Breast epithelium (tissue), 4 donors: ENCODE measurements at regions of chr13 and their contacts with region 1.

Region 1: GRCh38 chr13:45063261-45063860 is 56.9 kb upstream of the GTF2F2 start:
- DNase-seq: no peak
- H3K4me3 ChIP-seq: no peak overlapping the region
- H3K27ac ChIP-seq: no peak overlapping the region
- H3K4me1 ChIP-seq: no peaks in the 10 kb centered on the region
- H3K27me3 ChIP-seq: no peaks in the 10 kb centered on the region
- CTCF ChIP-seq: no peak
- POLR2A ChIP-seq: no peak

Region 2: DNA sequence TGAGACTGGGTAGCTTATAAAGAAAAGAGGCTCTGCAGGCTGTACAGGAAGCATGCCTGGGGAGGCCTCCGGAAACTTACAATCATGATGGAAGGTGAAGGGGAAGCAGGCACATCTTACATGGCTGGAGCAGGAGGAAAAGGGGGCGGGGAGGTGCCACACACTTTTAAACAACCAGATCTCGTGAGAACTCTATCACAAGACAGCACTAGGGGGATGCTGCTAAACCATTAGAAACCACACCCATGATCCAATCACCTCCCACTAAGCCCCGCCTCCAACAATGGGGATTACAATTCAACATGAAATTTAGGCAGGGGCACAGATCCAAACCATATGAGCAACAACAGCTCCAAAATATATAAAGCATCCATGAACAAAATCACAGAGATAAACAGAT is 10.4 kb after region 1 on chr13:
- intact Hi-C with region 1: loop called (anchors 1 kb)
- DNase-seq: no peak
- H3K4me3 ChIP-seq: no peak overlapping the region
- H3K27ac ChIP-seq: no peak overlapping the region
- H3K4me1 ChIP-seq: no peaks in the 10 kb centered on the region
- H3K27me3 ChIP-seq: no peaks in the 10 kb centered on the region
- CTCF ChIP-seq: no peak
- POLR2A ChIP-seq: no peak

Region 3: GRCh38 chr13:45325806-45326205 is 262.4 kb after region 1 on chr13:
- intact Hi-C with region 1: no loop called
- DNase-seq: no peak
- H3K4me3 ChIP-seq: no peak overlapping the region
- H3K27ac ChIP-seq: peak overlapping the region in 1 of 2 donors; percentile 40
- H3K4me1 ChIP-seq: no peaks in the 10 kb centered on the region
- H3K27me3 ChIP-seq: no peaks in the 10 kb centered on the region
- CTCF ChIP-seq: no peak
- POLR2A ChIP-seq: no peak